ENCODE measurements at regions of chr18 and their contacts with region 1.

Region 1: GRCh38 chr18:66560092-66560491 is 43.8 kb downstream of the CDH19 start:
- DNase-seq: peak; percentile 72
- ATAC-seq: peak; percentile 78
- H3K4me3 ChIP-seq: no peak overlapping the region
- H3K27ac ChIP-seq: no peak overlapping the region
- H3K4me1 ChIP-seq: peaks cover 9% of the 10 kb centered on the region; the same call in 1 of the 2 replicates
- H3K27me3 ChIP-seq: no peaks in the 10 kb centered on the region
- CTCF ChIP-seq: peak; percentile 73

Region 2: DNA sequence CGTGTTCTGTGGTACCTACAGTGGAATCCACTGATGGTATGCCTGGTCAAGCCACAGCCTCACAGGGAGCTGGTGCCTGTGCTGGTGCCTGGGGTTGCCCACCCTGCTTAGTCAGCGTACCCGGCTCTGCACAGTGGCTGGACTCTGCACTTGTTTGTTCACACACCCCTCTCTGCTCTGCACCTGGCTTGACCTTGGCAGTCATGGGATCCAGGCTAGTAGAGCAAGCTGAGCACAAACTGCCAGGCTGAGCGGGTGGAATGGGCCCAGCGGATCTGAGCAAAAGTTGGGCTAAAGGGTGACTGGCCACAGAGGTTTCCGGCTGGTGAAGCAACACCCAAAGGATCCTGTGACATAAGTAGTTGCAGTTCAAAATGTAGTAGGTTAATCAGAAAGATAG is 119.7 kb before region 1 on chr18:
- CTCF ChIA-PET with region 1: no interaction called
- POLR2A ChIA-PET with region 1: no interaction called
- intact Hi-C with region 1: no loop called
- DNase-seq: no peak
- ATAC-seq: no peak
- H3K4me3 ChIP-seq: no peak overlapping the region
- H3K27ac ChIP-seq: no peak overlapping the region
- H3K4me1 ChIP-seq: no peaks in the 10 kb centered on the region
- H3K27me3 ChIP-seq: no peaks in the 10 kb centered on the region
- CTCF ChIP-seq: no peak

Region 3: DNA sequence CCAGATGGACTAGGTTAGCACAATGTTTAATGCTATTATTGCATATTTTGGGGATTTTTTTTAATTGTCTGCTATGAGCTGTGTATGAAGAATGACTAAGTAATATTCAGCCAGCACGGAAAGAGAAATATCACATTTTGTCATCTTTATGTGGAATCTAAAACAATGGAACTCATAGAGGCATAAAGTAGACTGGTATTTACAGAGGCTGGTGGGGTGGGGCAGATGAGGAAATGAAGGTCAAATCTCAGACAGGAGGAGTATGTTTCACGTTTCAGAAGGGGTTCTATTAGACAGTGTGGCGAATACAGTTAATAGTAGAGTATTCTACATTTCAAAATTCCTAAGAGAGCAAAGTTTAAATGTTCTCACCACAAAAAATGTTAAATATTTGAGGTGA is 39.1 kb after region 1 on chr18:
- CTCF ChIA-PET with region 1: no interaction called
- POLR2A ChIA-PET with region 1: no interaction called
- intact Hi-C with region 1: loop called (anchors 5 kb)
- DNase-seq: peak; percentile 60
- ATAC-seq: peak; percentile 100
- H3K4me3 ChIP-seq: no peak overlapping the region
- H3K27ac ChIP-seq: no peak overlapping the region; the same call in 1 of the 2 replicates
- H3K4me1 ChIP-seq: peaks cover 6% of the 10 kb centered on the region; the same call in 1 of the 2 replicates
- H3K27me3 ChIP-seq: no peaks in the 10 kb centered on the region
- CTCF ChIP-seq: no peak

Region 4: GRCh38 chr18:66616523-66616983 is 56.5 kb after region 1 on chr18:
- CTCF ChIA-PET with region 1: interaction called, 3 read pairs
- POLR2A ChIA-PET with region 1: interaction called, 3 read pairs
- intact Hi-C with region 1: loop called (anchors 1 kb)
- DNase-seq: peak; percentile 57
- ATAC-seq: peak; percentile 94
- H3K4me3 ChIP-seq: no peak overlapping the region
- H3K27ac ChIP-seq: no peak overlapping the region
- H3K4me1 ChIP-seq: no peaks in the 10 kb centered on the region
- H3K27me3 ChIP-seq: no peaks in the 10 kb centered on the region
- CTCF ChIP-seq: peak; percentile 85

Region 5: DNA sequence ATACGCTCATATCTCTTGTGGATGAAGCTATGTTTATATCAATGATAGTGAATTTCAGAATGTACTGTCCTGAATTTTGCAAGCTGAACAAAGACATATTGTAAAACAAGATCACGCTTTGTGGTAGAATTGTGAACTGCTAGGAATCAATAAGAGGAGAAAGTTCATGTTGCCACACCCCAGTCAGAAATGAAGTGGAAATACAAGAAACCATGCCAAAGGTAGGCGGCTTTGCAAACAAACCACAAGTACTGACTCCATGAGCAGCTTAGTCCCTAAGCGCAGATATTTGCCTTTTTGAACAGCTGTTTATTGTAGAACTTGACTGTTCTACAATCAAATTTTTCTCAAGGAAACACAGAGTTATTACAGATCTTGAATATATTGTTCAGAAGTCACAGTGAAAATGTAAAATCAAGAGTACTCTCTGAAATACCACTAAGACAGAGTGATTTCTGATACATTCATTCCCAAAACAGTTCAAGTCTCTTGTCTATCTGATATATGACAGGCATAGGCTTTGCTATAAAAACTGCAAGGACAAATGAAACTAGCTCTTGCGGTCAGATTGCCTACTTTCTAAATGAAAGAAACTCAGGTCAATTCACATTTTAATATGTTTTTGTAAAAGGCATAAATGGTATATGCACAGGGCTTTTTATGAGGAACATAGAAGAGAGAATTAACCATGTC is 164.7 kb after region 1 on chr18:
- CTCF ChIA-PET with region 1: no interaction called
- POLR2A ChIA-PET with region 1: no interaction called
- intact Hi-C with region 1: loop called (anchors 1 kb)
- DNase-seq: peak; percentile 86
- ATAC-seq: peak; percentile 95
- H3K4me3 ChIP-seq: no peak overlapping the region
- H3K27ac ChIP-seq: peak overlapping the region; percentile 28
- H3K4me1 ChIP-seq: peaks cover 18% of the 10 kb centered on the region
- H3K27me3 ChIP-seq: no peaks in the 10 kb centered on the region
- CTCF ChIP-seq: no peak

Region 6: GRCh38 chr18:66749030-66749429 is 188.9 kb after region 1 on chr18:
- CTCF ChIA-PET with region 1: interaction called, 8 read pairs
- POLR2A ChIA-PET with region 1: no interaction called
- intact Hi-C with region 1: loop called (anchors 1 kb)
- DNase-seq: peak; percentile 50
- ATAC-seq: peak; percentile 69
- H3K4me3 ChIP-seq: no peak overlapping the region
- H3K27ac ChIP-seq: no peak overlapping the region
- H3K4me1 ChIP-seq: no peaks in the 10 kb centered on the region
- H3K27me3 ChIP-seq: peaks cover 2% of the 10 kb centered on the region; the same call in 1 of the 2 replicates
- CTCF ChIP-seq: peak; percentile 65

Region 7: DNA sequence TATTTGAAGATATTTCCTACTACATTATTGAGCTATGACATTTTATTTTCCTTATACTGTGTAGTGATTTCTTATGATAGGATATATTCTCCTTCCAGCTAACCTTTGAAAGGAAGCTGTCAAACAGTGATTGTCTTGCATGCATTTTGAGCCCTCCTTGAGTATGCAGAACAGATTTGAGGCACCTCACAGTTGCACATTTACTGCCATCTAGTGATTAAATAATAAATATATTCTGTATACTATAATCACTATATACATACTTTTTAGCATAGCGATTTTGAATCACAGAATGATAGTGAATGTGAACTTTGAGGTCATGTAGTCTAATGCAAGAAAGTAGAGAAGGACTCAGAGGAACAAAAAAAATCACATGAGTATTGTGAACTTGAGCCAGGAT is 312.2 kb after region 1 on chr18:
- CTCF ChIA-PET with region 1: no interaction called
- POLR2A ChIA-PET with region 1: no interaction called
- intact Hi-C with region 1: loop called (anchors 2 kb)
- DNase-seq: peak; percentile 40
- ATAC-seq: peak; percentile 79
- H3K4me3 ChIP-seq: no peak overlapping the region
- H3K27ac ChIP-seq: no peak overlapping the region
- H3K4me1 ChIP-seq: no peaks in the 10 kb centered on the region
- H3K27me3 ChIP-seq: no peaks in the 10 kb centered on the region
- CTCF ChIP-seq: peak; percentile 50

Region 8: DNA sequence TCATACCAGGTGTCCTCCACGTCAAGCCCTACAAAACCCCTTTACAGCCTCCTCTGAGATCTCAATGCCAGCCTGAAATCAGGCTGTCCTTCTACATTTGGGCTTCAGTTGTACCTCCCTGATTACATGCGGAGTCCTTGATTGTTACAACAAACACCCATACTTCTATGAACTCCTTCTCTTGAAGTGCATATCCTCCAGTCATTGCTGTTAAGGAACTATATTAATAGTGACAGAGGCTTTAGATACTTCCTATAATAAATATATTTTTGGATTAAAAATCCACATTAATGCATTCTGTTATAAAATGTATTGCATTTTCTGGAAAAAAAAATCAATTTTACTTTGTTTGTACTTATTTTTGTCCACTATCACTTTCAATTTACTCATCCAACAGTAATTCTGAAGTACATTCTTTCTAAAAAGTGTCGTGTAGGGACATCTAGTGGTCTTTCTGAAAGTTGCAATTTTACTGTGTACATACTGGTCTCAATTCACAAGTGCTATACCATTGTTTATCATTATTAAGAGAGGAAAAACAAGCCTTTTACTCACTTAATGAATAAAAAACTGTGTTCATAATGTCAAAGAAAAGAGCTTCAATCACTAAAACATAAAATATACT is 640.0 kb after region 1 on chr18:
- CTCF ChIA-PET with region 1: no interaction called
- POLR2A ChIA-PET with region 1: no interaction called
- intact Hi-C with region 1: loop called (anchors 10 kb)
- DNase-seq: peak; percentile 80
- ATAC-seq: peak; percentile 84
- H3K4me3 ChIP-seq: no peak overlapping the region
- H3K27ac ChIP-seq: no peak overlapping the region
- H3K4me1 ChIP-seq: no peaks in the 10 kb centered on the region
- H3K27me3 ChIP-seq: no peaks in the 10 kb centered on the region
- CTCF ChIP-seq: peak; percentile 74

Measured in PC-3 (cell line).